ENCODE measurements at regions of chr10 and their contacts with region 1.

Region 1: GRCh38 chr10:7687228-7687907 is 15.7 kb upstream of the ITIH2 start:
- DNase-seq: peak; percentile 95
- ATAC-seq: peak; percentile 92
- H3K4me3 ChIP-seq: no peak overlapping the region
- H3K27ac ChIP-seq: no peak overlapping the region
- H3K4me1 ChIP-seq: peaks cover 0 to 8% of the 10 kb centered on the region in 2 experiments; a peak in 1 of 4 replicates
- H3K27me3 ChIP-seq: peaks cover 3% of the 10 kb centered on the region; the same call in 1 of the 2 replicates
- CTCF ChIP-seq: peak; percentile 90 to 98 (median 93)
- POLR2A ChIP-seq: no peak
- RAD21 ChIP-seq: peak; percentile 87

Region 2: GRCh38 chr10:7501157-7501556 is 186.2 kb before region 1 on chr10:
- CTCF ChIA-PET with region 1: no interaction called
- POLR2A ChIA-PET with region 1: no interaction called
- RAD21 ChIA-PET with region 1: no interaction called
- intact Hi-C with region 1: no loop called
- DNase-seq: no peak
- ATAC-seq: no peak
- H3K4me3 ChIP-seq: no peak overlapping the region
- H3K27ac ChIP-seq: no peak overlapping the region
- H3K4me1 ChIP-seq: no peaks in the 10 kb centered on the region
- H3K27me3 ChIP-seq: peaks cover 21% of the 10 kb centered on the region
- CTCF ChIP-seq: no peak
- POLR2A ChIP-seq: no peak
- RAD21 ChIP-seq: no peak

Region 3: GRCh38 chr10:9302120-9302746 is 1614.9 kb after region 1 on chr10:
- CTCF ChIA-PET with region 1: no interaction called
- POLR2A ChIA-PET with region 1: no interaction called
- RAD21 ChIA-PET with region 1: no interaction called
- intact Hi-C with region 1: loop called (anchors 10 kb)
- DNase-seq: peak; percentile 23
- ATAC-seq: 0 out of 2 replicates have a peak, but pooled peaks have one; percentile 40
- H3K4me3 ChIP-seq: no peak overlapping the region
- H3K27ac ChIP-seq: no peak overlapping the region
- H3K4me1 ChIP-seq: no peaks in the 10 kb centered on the region
- H3K27me3 ChIP-seq: no peaks in the 10 kb centered on the region
- CTCF ChIP-seq: peak in 2 of 3 experiments; percentile 26 to 48; a peak in 3 of 6 replicates
- POLR2A ChIP-seq: no peak
- RAD21 ChIP-seq: peak; percentile 52

Measured in HCT116 (cell line).